ENCODE measurements at regions of chr12 and their contacts with region 1.

Region 1: DNA sequence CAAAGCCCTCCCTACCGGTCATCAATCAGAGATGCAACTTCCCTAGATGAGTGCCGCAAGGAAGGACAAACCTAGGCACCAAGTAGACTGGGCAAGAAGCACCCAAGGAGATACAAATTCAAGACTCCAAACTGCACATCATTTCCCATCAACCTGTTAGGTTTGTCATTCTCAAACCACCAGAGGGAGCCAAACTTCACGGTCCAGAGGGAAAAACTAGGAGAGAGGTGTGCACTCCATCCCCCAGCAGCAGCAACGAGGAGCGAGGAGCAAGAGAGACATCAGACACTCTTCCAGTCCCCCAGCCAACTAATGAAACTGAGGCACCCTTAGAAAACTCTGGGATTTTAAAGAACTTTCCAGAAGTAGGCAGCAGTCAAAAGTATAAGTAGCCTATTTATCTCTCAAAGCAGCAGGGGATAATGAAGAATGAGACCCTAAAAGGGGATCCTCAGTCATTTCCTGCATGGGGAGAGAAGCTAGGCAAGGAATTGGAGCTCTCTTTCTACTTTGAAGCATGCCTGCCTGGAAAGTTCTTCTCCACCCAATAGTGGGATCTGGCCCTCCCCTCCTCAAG is 37.0 kb upstream of the NT5DC3 start:
- DNase-seq: peak; percentile 68
- ATAC-seq: peak; percentile 96
- H3K4me3 ChIP-seq: no peak overlapping the region
- H3K27ac ChIP-seq: no peak overlapping the region
- H3K4me1 ChIP-seq: no peaks in the 10 kb centered on the region
- H3K27me3 ChIP-seq: peaks cover 1% of the 10 kb centered on the region
- CTCF ChIP-seq: peak; percentile 82
- POLR2A ChIP-seq: no peak
- RAD21 ChIP-seq: peak; percentile 90

Region 2: GRCh38 chr12:103596981-103597380 is 281.0 kb before region 1 on chr12:
- CTCF ChIA-PET with region 1: no interaction called
- POLR2A ChIA-PET with region 1: no interaction called
- dilution Hi-C with region 1: no loop called
- in situ Hi-C with region 1: no loop called
- intact Hi-C with region 1: no loop called
- DNase-seq: no peak
- ATAC-seq: no peak
- H3K4me3 ChIP-seq: no peak overlapping the region
- H3K27ac ChIP-seq: no peak overlapping the region
- H3K4me1 ChIP-seq: no peaks in the 10 kb centered on the region
- H3K27me3 ChIP-seq: no peaks in the 10 kb centered on the region
- CTCF ChIP-seq: no peak
- POLR2A ChIP-seq: no peak
- RAD21 ChIP-seq: no peak

Region 3: DNA sequence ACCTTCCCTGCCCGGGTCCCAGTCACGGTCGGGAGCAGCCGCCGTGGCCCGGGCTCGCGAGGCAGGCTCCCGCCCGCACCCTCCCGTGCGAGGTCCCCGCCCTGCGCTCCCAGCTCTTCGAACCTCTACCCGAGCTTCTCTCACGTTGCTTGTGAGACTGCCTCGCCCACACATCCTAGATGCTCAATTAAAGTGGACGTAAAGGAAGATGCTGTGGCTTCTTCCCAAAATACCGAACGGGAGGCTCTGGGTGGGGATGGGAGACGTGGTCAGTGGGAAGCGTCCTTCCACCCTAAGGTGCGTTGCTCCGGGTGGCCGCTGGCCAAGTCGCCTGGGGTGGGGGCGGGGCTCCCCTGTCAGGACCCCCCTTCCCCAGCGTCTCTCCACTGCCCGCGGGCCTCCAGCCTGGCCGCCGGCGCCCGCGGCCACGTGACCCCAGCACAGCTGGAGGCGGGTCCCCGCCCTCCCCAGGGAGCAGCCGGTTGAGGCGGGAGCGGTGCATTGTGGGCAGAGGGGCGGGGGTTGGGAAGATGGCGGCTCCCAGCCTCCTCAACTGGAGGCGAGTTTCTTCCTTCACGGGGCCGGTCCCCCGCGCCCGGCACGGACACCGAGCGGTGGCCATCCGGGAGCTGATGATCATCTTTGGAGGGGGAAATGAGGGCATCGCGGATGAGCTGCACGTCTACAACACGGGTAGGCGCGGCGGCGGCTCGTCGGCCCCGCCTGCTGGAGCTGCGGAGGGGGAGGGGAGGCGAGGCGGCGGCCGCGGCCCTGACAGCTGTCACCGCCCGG is 186.2 kb after region 1 on chr12 and contains the start of gene HCFC2:
- CTCF ChIA-PET with region 1: no interaction called
- POLR2A ChIA-PET with region 1: no interaction called
- dilution Hi-C with region 1: no loop called
- in situ Hi-C with region 1: no loop called
- intact Hi-C with region 1: loop called (anchors 5 kb)
- DNase-seq: peak; percentile 87
- ATAC-seq: peak; percentile 95
- H3K4me3 ChIP-seq: peak within 1 kb of the TSS; percentile 89
- H3K27ac ChIP-seq: peak within 1 kb of the TSS; percentile 98
- H3K4me1 ChIP-seq: peaks cover 2% of the 10 kb centered on the region
- H3K27me3 ChIP-seq: no peaks in the 10 kb centered on the region
- CTCF ChIP-seq: no peak
- POLR2A ChIP-seq: no peak
- RAD21 ChIP-seq: no peak
- total RNA-seq, gene HCFC2: 33.3 and 34.2 TPM in 2 replicates

Region 4: GRCh38 chr12:104294845-104295688 is 417.0 kb after region 1 on chr12:
- CTCF ChIA-PET with region 1: no interaction called
- POLR2A ChIA-PET with region 1: no interaction called
- dilution Hi-C with region 1: no loop called
- in situ Hi-C with region 1: no loop called
- intact Hi-C with region 1: loop called (anchors 10 kb)
- DNase-seq: no peak
- ATAC-seq: no peak
- H3K4me3 ChIP-seq: no peak overlapping the region
- H3K27ac ChIP-seq: 0 out of 2 replicates have a peak overlapping the region, but pooled peaks have one; percentile 1
- H3K4me1 ChIP-seq: peaks cover 23% of the 10 kb centered on the region
- H3K27me3 ChIP-seq: no peaks in the 10 kb centered on the region
- CTCF ChIP-seq: no peak
- POLR2A ChIP-seq: no peak
- RAD21 ChIP-seq: no peak